ENCODE measurements at regions of chr14 and their contacts with region 1.

Region 1: DNA sequence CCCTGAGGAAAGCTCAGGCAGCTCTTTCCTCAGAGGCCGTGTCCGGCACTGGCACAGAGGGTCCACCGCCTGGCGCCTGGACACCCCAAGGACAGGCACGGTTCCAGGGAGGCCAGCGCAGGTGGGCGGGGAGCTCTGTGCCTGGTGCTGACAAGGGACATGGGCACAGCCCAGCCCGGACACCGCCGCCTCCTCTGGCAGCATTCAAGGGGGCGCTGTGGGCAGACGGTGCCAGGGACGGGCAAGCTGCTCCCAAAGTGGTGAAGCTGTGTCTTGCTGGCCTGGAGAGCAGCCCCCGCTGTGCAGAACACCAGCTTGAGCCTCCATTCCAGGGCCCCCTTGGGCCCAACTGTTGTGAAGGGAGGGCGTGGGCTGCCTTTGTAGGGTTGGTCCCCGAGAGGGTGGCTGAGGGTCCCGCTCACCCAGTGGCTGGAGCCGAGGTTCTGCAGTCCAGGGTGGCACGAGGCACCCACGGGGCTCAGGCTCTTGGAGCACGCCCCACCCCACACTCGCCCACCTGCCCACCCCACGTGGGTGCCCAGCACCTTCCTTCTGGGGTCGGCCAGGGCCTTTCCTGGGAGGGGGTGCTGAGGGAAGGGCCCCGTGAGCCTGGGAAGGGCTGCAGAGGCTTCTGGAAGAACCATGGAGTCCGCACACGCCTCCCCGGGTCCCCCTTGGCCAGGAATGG is 29.2 kb upstream of the TEX22 start:
- DNase-seq: no peak
- H3K4me3 ChIP-seq: no peak overlapping the region
- CTCF ChIP-seq: no peak

Region 2: GRCh38 chr14:105281371-105282097 is 87.6 kb before region 1 on chr14:
- CTCF ChIA-PET with region 1: no interaction called
- POLR2A ChIA-PET with region 1: no interaction called
- DNase-seq: peak; percentile 23
- H3K4me3 ChIP-seq: no peak overlapping the region
- CTCF ChIP-seq: peak; percentile 58

Region 3: DNA sequence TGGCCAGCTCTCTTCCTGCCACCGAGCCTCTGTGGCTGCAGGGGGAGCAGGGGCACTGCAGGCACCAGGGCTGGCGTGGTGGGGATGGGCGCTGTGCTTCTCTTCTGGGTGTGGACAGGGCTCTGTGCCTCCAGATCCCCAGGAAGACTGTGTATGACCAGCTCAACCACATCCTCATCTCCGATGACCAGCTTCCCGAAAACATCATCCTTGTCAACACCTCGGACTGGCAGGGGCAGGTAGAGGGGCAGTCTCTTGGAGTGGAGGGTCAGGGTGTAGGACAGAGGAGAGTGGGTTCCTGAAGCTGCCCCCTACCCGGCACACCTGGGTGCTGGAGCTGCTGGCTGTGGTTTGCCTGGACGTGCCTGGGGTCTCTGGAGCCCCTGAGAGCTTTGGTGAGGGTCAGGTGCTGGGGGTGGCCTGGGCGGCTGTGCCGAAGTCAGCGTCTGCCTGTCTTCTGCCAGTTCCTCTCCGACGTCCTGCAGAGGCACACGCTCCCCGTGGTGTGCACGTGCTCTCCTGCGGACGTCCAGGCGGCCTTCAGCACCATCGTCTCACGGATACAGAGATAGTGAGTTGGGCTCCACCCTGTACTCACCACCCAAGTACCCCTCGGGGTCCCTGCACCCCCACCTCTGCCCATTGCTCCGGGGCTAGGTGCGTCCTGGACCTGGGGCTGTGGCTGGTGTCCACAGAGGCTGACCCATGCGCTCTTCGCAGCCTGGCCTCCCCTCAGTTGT is 13.4 kb after region 1 on chr14:
- CTCF ChIA-PET with region 1: interaction called, 19 read pairs
- POLR2A ChIA-PET with region 1: no interaction called
- DNase-seq: no peak
- H3K4me3 ChIP-seq: no peak overlapping the region
- CTCF ChIP-seq: no peak

Region 4: GRCh38 chr14:105490572-105491366 is 121.7 kb after region 1 on chr14 and contains the start of gene TEDC1:
- CTCF ChIA-PET with region 1: interaction called, 91 read pairs
- POLR2A ChIA-PET with region 1: no interaction called
- DNase-seq: peak; percentile 100
- H3K4me3 ChIP-seq: peak within 1 kb of the TSS; percentile 71
- CTCF ChIP-seq: peak; percentile 77

Region 5: GRCh38 chr14:105527661-105528581 is 158.8 kb after region 1 on chr14:
- CTCF ChIA-PET with region 1: interaction called, 16 read pairs
- POLR2A ChIA-PET with region 1: no interaction called
- DNase-seq: no peak
- H3K4me3 ChIP-seq: peak overlapping the region; percentile 63
- CTCF ChIP-seq: peak; percentile 95